RWPE1 (cell line): ENCODE measurements at regions of chr1 and their contacts with region 1.

Region 1: DNA sequence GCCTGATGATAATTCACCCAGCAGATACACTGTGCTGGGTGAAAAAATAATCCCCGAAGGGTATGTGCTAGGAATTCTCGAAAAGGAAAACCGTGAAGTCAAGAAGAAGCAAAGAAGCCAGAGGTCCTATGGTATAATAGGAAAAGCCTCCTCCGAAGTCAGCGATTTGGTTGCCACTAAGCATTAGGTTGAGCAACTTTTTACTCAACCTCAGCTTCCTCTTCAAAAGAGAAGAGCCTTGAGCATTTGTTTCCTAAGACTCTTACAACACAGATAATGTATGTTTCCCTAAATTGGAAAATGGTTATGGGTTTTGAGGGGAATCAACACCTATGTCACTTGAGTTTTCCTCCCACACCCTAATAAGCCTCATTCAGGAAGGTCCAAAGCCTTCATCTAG is 21.3 kb upstream of the MNDA start:
- DNase-seq: no peak
- H3K27ac ChIP-seq: no peak overlapping the region
- CTCF ChIP-seq: no peak

Region 2: GRCh38 chr1:158989424-158989823 is 179.6 kb after region 1 on chr1:
- CTCF ChIA-PET with region 1: interaction called, 10 read pairs
- POLR2A ChIA-PET with region 1: no interaction called
- DNase-seq: no peak
- H3K27ac ChIP-seq: no peak overlapping the region
- CTCF ChIP-seq: no peak